Caco-2 (cell line): ENCODE measurements at regions of chr14 and their contacts with region 1.

Region 1: GRCh38 chr14:70317969-70318634 is 41.4 kb downstream of the COX16 start:
- DNase-seq: peak; percentile 83 to 86
- H3K4me3 ChIP-seq: no peak overlapping the region
- H3K4me3 Mint-ChIP-seq: no peak overlapping the region
- H3K27ac Mint-ChIP-seq: peak overlapping the region; percentile 87
- H3K4me1 ChIP-seq: peaks cover 33% of the 10 kb centered on the region
- H3K4me1 Mint-ChIP-seq: peaks cover 18% of the 10 kb centered on the region
- H3K27me3 ChIP-seq: no peaks in the 10 kb centered on the region
- H3K27me3 Mint-ChIP-seq: no peaks in the 10 kb centered on the region
- CTCF ChIP-seq: peak; percentile 58 to 77

Region 2: GRCh38 chr14:69818757-69819191 is 499.3 kb before region 1 on chr14:
- CTCF ChIA-PET with region 1: no interaction called
- POLR2A ChIA-PET with region 1: no interaction called
- intact Hi-C with region 1: loop called (anchors 1 kb)
- DNase-seq: peak; percentile 70 to 81
- H3K4me3 ChIP-seq: no peak overlapping the region
- H3K4me3 Mint-ChIP-seq: no peak overlapping the region
- H3K27ac Mint-ChIP-seq: no peak overlapping the region
- H3K4me1 ChIP-seq: peaks cover 18% of the 10 kb centered on the region
- H3K4me1 Mint-ChIP-seq: no peaks in the 10 kb centered on the region
- H3K27me3 ChIP-seq: no peaks in the 10 kb centered on the region
- H3K27me3 Mint-ChIP-seq: no peaks in the 10 kb centered on the region
- CTCF ChIP-seq: peak; percentile 76 to 80

Region 3: GRCh38 chr14:70045844-70046535 is 272.1 kb before region 1 on chr14:
- CTCF ChIA-PET with region 1: interaction called, 3 read pairs
- POLR2A ChIA-PET with region 1: no interaction called
- intact Hi-C with region 1: loop called (anchors 1 kb)
- DNase-seq: peak; percentile 54 to 64
- H3K4me3 ChIP-seq: no peak overlapping the region
- H3K4me3 Mint-ChIP-seq: no peak overlapping the region
- H3K27ac Mint-ChIP-seq: peak overlapping the region; percentile 65
- H3K4me1 ChIP-seq: peaks cover 33% of the 10 kb centered on the region
- H3K4me1 Mint-ChIP-seq: peaks cover 44% of the 10 kb centered on the region
- H3K27me3 ChIP-seq: no peaks in the 10 kb centered on the region
- H3K27me3 Mint-ChIP-seq: no peaks in the 10 kb centered on the region
- CTCF ChIP-seq: peak; percentile 43 to 52

Region 4: DNA sequence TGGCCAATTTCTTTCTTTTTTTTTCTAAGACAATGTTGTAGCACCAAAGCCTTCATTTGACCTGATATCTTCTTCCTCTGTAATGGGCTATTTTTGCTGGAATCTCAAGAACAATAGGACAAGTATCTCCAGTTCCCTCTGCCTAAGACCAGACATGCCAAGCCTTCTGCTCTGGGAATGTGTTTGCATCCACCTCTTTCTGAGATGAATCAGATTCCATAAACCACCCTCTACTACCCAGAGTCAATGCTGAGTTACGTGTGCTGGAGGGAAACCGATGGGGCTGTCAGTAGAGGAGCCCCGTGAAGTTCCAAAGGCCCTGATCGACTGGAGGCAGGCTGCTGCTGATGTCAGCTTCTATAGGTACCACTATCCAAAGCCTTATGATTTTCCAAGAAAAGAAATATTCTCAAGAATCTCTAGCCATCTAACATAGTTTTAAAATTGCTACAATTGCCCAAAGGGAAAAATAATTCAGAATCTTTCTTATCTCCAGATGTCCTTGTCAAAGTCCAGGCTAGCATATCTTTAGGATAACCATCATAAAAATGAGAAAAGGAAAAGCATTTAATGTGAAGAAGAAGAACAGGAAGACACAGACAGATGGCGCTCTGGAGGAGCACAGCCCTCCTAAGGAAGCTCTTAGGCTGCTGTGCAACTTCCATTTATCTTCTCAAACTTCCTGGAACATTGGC is 231.3 kb before region 1 on chr14:
- CTCF ChIA-PET with region 1: interaction called, 5 read pairs
- POLR2A ChIA-PET with region 1: no interaction called
- intact Hi-C with region 1: loop called (anchors 1 kb)
- DNase-seq: peak; percentile 50 to 51
- H3K4me3 ChIP-seq: no peak overlapping the region
- H3K4me3 Mint-ChIP-seq: no peak overlapping the region
- H3K27ac Mint-ChIP-seq: no peak overlapping the region
- H3K4me1 ChIP-seq: peaks cover 7% of the 10 kb centered on the region
- H3K4me1 Mint-ChIP-seq: peaks cover 8% of the 10 kb centered on the region
- H3K27me3 ChIP-seq: no peaks in the 10 kb centered on the region
- H3K27me3 Mint-ChIP-seq: peaks cover 10% of the 10 kb centered on the region
- CTCF ChIP-seq: peak; percentile 51 to 74

Region 5: DNA sequence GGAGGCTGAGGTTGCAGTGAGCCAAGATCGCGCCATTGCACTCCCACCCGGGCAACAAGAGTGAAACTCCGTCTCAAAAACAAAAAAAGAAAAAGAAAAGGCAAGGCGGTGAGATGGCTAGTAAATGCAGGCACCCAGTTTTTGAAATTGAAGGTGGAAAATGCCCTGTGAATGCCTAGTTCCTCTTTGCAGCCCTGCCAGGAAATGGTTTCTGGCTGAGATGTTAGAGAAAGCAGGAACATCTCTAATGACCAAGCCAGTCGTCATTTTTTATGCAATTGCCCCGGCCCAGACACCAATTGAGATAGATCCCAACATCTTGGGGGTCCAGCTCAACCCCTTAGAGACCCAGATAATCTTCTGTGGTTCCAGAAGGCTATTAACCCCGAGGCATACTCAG is 146.4 kb before region 1 on chr14:
- CTCF ChIA-PET with region 1: no interaction called
- POLR2A ChIA-PET with region 1: no interaction called
- intact Hi-C with region 1: no loop called
- DNase-seq: no peak
- H3K4me3 ChIP-seq: no peak overlapping the region
- H3K4me3 Mint-ChIP-seq: no peak overlapping the region
- H3K27ac Mint-ChIP-seq: no peak overlapping the region
- H3K4me1 ChIP-seq: no peaks in the 10 kb centered on the region
- H3K4me1 Mint-ChIP-seq: no peaks in the 10 kb centered on the region
- H3K27me3 ChIP-seq: no peaks in the 10 kb centered on the region
- H3K27me3 Mint-ChIP-seq: peaks cover 30% of the 10 kb centered on the region
- CTCF ChIP-seq: no peak

Region 6: GRCh38 chr14:70359181-70360090 is 41.3 kb after region 1 on chr14 and contains the start of gene COX16:
- CTCF ChIA-PET with region 1: no interaction called
- POLR2A ChIA-PET with region 1: no interaction called
- intact Hi-C with region 1: loop called (anchors 1 kb)
- DNase-seq: peak; percentile 86 to 92
- H3K4me3 ChIP-seq: peak within 1 kb of the TSS; percentile 72
- H3K4me3 Mint-ChIP-seq: peak within 1 kb of the TSS; percentile 79
- H3K27ac Mint-ChIP-seq: peak within 1 kb of the TSS; percentile 82
- H3K4me1 ChIP-seq: no peaks in the 10 kb centered on the region
- H3K4me1 Mint-ChIP-seq: no peaks in the 10 kb centered on the region
- H3K27me3 ChIP-seq: no peaks in the 10 kb centered on the region
- H3K27me3 Mint-ChIP-seq: no peaks in the 10 kb centered on the region
- CTCF ChIP-seq: no peak
- total RNA-seq, gene COX16: 62.4 and 68.1 TPM in 2 replicates

Region 7: GRCh38 chr14:70585219-70585618 is 267.1 kb after region 1 on chr14:
- CTCF ChIA-PET with region 1: no interaction called
- POLR2A ChIA-PET with region 1: no interaction called
- intact Hi-C with region 1: loop called (anchors 5 kb)
- DNase-seq: peak in 1 of 2 experiments; percentile 36
- H3K4me3 ChIP-seq: no peak overlapping the region
- H3K4me3 Mint-ChIP-seq: no peak overlapping the region
- H3K27ac Mint-ChIP-seq: no peak overlapping the region
- H3K4me1 ChIP-seq: no peaks in the 10 kb centered on the region
- H3K4me1 Mint-ChIP-seq: no peaks in the 10 kb centered on the region
- H3K27me3 ChIP-seq: no peaks in the 10 kb centered on the region
- H3K27me3 Mint-ChIP-seq: no peaks in the 10 kb centered on the region
- CTCF ChIP-seq: peak; percentile 33 to 38